Uterus (tissue), 4 donors: ENCODE measurements at regions of chr11 and their contacts with region 1.

Region 1: GRCh38 chr11:6682936-6683861 is at the start of gene MRPL17:
- DNase-seq: peak; percentile 99 to 100
- H3K4me3 ChIP-seq: peak within 1 kb of the TSS; percentile 93 to 98
- H3K27ac ChIP-seq: peak within 1 kb of the TSS; percentile 89 to 93
- H3K4me1 ChIP-seq: peaks cover 7 to 17% of the 10 kb centered on the region in 2 donors
- H3K27me3 ChIP-seq: no peaks in the 10 kb centered on the region
- CTCF ChIP-seq: peak; percentile 88 to 97 (median 94)
- POLR2A ChIP-seq: peak; percentile 71 to 83
- total RNA-seq, gene MRPL17: 30.6 to 452 (median 55.0) TPM

Region 2: GRCh38 chr11:6371825-6372224 is 311.4 kb before region 1 on chr11:
- intact Hi-C with region 1: no loop called
- DNase-seq: no peak
- H3K4me3 ChIP-seq: no peak overlapping the region
- H3K27ac ChIP-seq: no peak overlapping the region
- H3K4me1 ChIP-seq: no peaks in the 10 kb centered on the region
- H3K27me3 ChIP-seq: no peaks in the 10 kb centered on the region
- CTCF ChIP-seq: no peak
- POLR2A ChIP-seq: no peak

Region 3: GRCh38 chr11:6538456-6538855 is 144.7 kb before region 1 on chr11:
- intact Hi-C with region 1: loop called (anchors 5 kb)
- DNase-seq: no peak
- H3K4me3 ChIP-seq: no peak overlapping the region
- H3K27ac ChIP-seq: no peak overlapping the region
- H3K4me1 ChIP-seq: no peaks in the 10 kb centered on the region
- H3K27me3 ChIP-seq: no peaks in the 10 kb centered on the region
- CTCF ChIP-seq: no peak
- POLR2A ChIP-seq: no peak

Region 4: DNA sequence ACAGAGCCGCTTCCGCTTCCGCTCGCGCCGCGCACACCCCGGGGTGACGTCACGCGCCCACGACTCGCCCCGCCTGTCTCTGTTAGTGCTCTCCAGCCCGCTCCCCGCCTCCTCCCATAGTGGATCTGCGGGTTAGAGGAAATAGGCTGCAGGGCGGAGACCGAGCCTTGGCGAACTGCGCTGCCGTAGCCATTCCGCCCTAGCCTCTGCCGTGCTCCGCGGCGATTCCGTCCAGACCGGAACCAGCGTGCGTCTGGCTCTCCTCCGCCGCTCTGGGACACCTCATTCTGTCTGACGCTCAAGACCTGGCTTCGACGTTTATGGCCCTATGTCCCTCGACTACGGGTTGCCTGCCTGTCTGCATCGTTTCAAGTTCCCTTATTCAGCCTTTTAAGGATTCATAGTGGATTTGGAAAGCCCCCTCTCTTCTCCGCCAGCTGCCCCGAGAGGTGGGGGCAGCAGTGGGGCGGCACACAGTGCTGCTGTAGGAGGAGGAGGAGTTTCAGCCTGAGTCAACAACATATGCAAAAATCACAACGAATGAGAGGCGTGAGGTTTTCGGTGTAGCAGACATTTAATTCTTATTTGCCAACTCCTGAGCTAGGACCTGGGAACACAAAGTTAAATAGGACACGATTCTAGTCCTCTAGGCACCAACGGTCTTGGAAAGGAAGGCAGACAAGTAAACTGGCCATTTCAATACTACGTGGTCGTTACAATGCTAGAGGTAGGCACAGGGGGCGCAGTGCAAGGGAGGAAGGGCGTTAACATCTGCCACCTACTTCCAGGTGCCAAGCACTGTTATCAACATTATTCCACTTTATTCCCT is 70.8 kb before region 1 on chr11 and contains the start of gene TAF10:
- intact Hi-C with region 1: loop called (anchors 10 kb)
- DNase-seq: peak; percentile 98
- H3K4me3 ChIP-seq: peak within 1 kb of the TSS; percentile 70 to 94
- H3K27ac ChIP-seq: peak within 1 kb of the TSS; percentile 99
- H3K4me1 ChIP-seq: peaks cover 11 to 31% of the 10 kb centered on the region in 2 donors
- H3K27me3 ChIP-seq: no peaks in the 10 kb centered on the region
- CTCF ChIP-seq: peak; percentile 27 to 50 (median 37)
- POLR2A ChIP-seq: peak; percentile 95 to 98
- total RNA-seq, gene TAF10: 11.5 to 137 (median 67.1) TPM